GM10248 (cell line): ENCODE measurements at regions of chr13 and their contacts with region 1.

Region 1: DNA sequence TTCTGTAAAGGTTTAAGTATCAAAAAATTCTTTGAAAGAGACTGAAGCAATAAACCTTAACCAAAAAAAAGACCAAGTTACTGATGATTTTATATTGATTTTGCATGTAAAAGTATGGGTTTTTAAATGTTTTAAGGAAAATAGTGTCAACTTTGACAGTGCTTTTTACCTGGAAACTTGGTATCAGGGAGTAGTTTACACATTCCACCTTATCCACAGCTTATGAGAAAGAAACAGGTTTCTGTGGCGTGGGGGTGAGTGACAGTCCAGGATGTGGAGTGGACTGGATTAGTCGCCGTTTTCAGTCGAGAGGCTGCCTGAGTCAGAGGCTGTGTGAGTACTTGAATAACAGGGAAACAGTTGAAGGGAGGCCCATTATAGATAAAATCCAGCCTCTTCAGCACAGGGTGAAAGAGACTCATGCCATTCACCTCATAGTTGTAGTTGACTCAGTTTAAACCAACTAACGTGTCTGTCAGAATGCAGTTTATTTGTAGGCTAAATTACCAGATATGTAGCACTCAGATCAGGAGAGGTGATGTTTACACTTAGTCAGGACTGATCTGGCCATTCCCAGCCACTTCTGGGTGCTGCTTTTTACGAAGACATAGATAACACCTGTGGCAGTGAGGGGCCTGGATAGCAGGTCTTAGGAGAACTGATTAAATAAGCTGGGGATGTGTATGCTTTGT is 595 bp upstream of the GPR183 start:
- DNase-seq: no peak
- CTCF ChIP-seq: no peak

Region 2: GRCh38 chr13:99281811-99282263 is 26.0 kb before region 1 on chr13:
- CTCF ChIA-PET with region 1: interaction called, 12 read pairs
- POLR2A ChIA-PET with region 1: no interaction called
- DNase-seq: peak; percentile 42
- CTCF ChIP-seq: no peak

Region 3: GRCh38 chr13:99296398-99296797 is 11.4 kb before region 1 on chr13:
- CTCF ChIA-PET with region 1: interaction called, 6 read pairs
- POLR2A ChIA-PET with region 1: interaction called, 13 read pairs
- DNase-seq: no peak
- CTCF ChIP-seq: no peak

Region 4: DNA sequence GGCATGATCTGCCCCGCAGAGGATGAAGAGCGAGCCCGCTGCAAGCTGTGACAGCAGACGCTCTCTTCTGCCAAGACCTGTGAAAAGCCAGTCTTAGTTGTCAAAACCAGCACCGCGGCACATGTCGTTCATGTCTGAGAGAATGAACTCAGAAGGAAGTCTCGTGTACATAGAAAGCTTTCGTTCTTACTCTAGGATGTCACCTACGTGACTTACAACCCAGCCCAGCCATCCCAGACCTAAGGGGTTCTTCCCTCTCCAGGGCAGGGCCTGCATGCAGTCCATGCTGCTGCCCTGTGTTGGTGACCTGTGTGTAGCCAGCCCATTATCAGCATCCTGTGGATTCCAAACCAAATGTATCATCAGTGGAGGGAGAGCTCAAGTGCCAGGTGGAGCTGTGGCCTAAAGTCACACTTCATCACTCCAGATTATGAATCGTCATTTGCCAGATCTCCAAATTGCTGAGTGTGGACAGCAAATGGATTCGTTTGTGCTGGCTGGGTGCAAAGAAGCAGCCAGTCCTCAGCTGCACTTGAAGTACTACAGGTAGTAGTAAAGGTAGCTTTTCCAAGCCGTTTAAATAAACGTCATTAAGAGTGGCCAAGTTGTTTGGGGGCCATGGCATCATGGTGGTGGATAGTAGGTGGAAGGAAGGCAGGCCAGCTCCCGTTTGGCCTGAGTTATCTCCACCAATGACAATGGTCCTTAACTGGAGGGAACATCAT is 73.3 kb after region 1 on chr13:
- CTCF ChIA-PET with region 1: interaction called, 14 read pairs
- POLR2A ChIA-PET with region 1: no interaction called
- DNase-seq: peak; percentile 74
- CTCF ChIP-seq: no peak